Right ventricle myocardium inferior (tissue), 1 donor: ENCODE measurements at regions of chr7 and their contacts with region 1.

Region 1: GRCh38 chr7:123643495-123644441 is 11.9 kb upstream of the LMOD2 start:
- DNase-seq: no peak
- ATAC-seq: peak; percentile 51

Region 2: DNA sequence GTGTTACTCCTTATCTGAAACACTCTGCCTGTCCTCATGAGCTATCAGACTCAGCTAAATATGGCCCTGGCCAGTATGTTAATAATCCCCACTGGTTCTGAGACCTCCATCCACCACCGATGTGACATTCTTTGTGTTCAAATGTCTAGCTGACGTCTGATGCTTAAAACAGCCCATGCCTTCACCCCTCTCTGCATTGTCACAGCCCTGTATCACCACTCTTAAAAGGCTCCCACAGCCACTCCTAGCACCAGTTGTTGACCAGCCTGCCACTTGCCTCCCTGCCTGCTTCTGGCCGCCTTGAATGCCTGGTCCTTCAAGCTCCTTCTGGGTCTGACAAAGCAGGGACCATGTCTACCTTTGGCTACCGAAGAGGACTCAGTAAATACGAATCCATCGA is 11.8 kb after region 1 on chr7 and contains the start of gene LMOD2:
- intact Hi-C with region 1: loop called (anchors 1 kb)
- DNase-seq: no peak
- ATAC-seq: peak; percentile 84
- total RNA-seq, gene LMOD2: 492 TPM